ENCODE measurements at regions of chr13 and their contacts with region 1.

Region 1: DNA sequence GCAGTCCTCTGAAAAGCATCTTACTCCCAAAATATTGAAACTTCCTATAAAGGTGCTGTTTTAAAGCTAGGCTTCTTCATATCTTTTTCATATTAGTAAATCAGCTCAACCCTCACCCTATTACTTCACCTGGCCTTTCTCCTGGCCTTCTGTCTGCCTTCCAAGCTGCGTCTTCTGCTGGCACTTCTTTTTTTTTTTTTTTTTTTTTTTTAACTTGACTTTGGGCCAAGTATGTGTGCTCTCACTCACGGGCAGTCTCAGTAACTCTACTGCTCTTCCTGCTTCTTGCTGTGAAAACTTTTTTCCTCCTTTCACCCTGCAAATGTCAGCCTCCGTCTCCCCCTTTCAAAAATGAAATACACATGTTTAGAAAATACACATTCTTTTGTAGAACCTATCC is 41.2 kb upstream of the KCTD4 start:
- DNase-seq: peak in 1 of 2 experiments; percentile 23
- H3K4me3 ChIP-seq: no peak overlapping the region
- H3K27ac ChIP-seq: no peak overlapping the region
- H3K4me1 ChIP-seq: no peaks in the 10 kb centered on the region
- H3K27me3 ChIP-seq: no peaks in the 10 kb centered on the region
- CTCF ChIP-seq: no peak

Region 2: GRCh38 chr13:45119991-45120864 is 121.8 kb before region 1 on chr13 and contains the start of gene GTF2F2:
- CTCF ChIA-PET with region 1: no interaction called
- POLR2A ChIA-PET with region 1: interaction called, 16 read pairs
- intact Hi-C with region 1: loop called (anchors 10 kb)
- DNase-seq: peak; percentile 79 to 89
- H3K4me3 ChIP-seq: peak within 1 kb of the TSS; percentile 96
- H3K27ac ChIP-seq: peak within 1 kb of the TSS; percentile 74
- H3K4me1 ChIP-seq: peaks cover 18% of the 10 kb centered on the region
- H3K27me3 ChIP-seq: no peaks in the 10 kb centered on the region
- CTCF ChIP-seq: no peak
- total RNA-seq, gene GTF2F2: 26.5 and 28.8 TPM in 2 replicates

Region 3: GRCh38 chr13:45167611-45168556 is 74.2 kb before region 1 on chr13:
- CTCF ChIA-PET with region 1: interaction called, 15 read pairs
- POLR2A ChIA-PET with region 1: no interaction called
- intact Hi-C with region 1: no loop called
- DNase-seq: peak; percentile 84 to 98
- H3K4me3 ChIP-seq: peak overlapping the region; percentile 22; the same call in 1 of the 2 replicates
- H3K27ac ChIP-seq: peak overlapping the region; percentile 84
- H3K4me1 ChIP-seq: peaks cover 52% of the 10 kb centered on the region
- H3K27me3 ChIP-seq: no peaks in the 10 kb centered on the region
- CTCF ChIP-seq: no peak

Region 4: GRCh38 chr13:45194081-45194939 is 47.8 kb before region 1 on chr13:
- CTCF ChIA-PET with region 1: no interaction called
- POLR2A ChIA-PET with region 1: interaction called, 17 read pairs
- intact Hi-C with region 1: no loop called
- DNase-seq: no peak
- H3K4me3 ChIP-seq: no peak overlapping the region
- H3K27ac ChIP-seq: no peak overlapping the region
- H3K4me1 ChIP-seq: peaks cover 24% of the 10 kb centered on the region
- H3K27me3 ChIP-seq: no peaks in the 10 kb centered on the region
- CTCF ChIP-seq: no peak

Region 5: GRCh38 chr13:45219938-45220375 is 22.1 kb before region 1 on chr13:
- CTCF ChIA-PET with region 1: interaction called, 11 read pairs
- POLR2A ChIA-PET with region 1: interaction called, 18 read pairs
- intact Hi-C with region 1: no loop called
- DNase-seq: peak; percentile 55 to 100
- H3K4me3 ChIP-seq: peak overlapping the region; percentile 20; the same call in 1 of the 2 replicates
- H3K27ac ChIP-seq: peak overlapping the region; percentile 82
- H3K4me1 ChIP-seq: peaks cover 36% of the 10 kb centered on the region
- H3K27me3 ChIP-seq: no peaks in the 10 kb centered on the region
- CTCF ChIP-seq: no peak

Region 6: DNA sequence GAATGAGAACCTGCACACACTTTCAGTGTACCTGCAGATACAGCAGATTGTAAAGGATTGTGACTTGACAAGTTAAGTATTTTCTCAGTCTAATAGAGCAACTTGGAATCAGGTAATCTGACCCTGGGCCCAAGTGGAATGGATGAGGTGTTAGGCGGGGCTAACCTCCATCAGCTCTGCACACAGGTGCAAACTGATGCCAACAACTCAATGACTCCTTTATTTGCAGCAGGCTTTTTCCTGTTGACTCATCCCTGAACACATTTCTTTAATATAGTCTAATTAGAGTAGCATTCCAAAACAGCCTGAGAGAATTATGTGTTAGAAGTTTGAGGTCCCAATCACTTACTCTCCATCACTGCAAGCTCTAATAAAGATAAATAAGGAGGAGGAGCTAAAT is 50.1 kb after region 1 on chr13:
- CTCF ChIA-PET with region 1: interaction called, 12 read pairs
- POLR2A ChIA-PET with region 1: no interaction called
- intact Hi-C with region 1: no loop called
- DNase-seq: peak; percentile 78 to 96
- H3K4me3 ChIP-seq: no peak overlapping the region
- H3K27ac ChIP-seq: peak overlapping the region; percentile 70
- H3K4me1 ChIP-seq: peaks cover 26% of the 10 kb centered on the region
- H3K27me3 ChIP-seq: no peaks in the 10 kb centered on the region
- CTCF ChIP-seq: no peak

Region 7: GRCh38 chr13:45662162-45662561 is 420.1 kb after region 1 on chr13:
- CTCF ChIA-PET with region 1: no interaction called
- POLR2A ChIA-PET with region 1: no interaction called
- intact Hi-C with region 1: no loop called
- DNase-seq: no peak
- H3K4me3 ChIP-seq: no peak overlapping the region
- H3K27ac ChIP-seq: no peak overlapping the region
- H3K4me1 ChIP-seq: no peaks in the 10 kb centered on the region
- H3K27me3 ChIP-seq: no peaks in the 10 kb centered on the region
- CTCF ChIP-seq: no peak

Measured in PC-9 (cell line).